Left cardiac atrium (tissue), 4 donors: ENCODE measurements at regions of chr2 and their contacts with region 1.

Region 1: DNA sequence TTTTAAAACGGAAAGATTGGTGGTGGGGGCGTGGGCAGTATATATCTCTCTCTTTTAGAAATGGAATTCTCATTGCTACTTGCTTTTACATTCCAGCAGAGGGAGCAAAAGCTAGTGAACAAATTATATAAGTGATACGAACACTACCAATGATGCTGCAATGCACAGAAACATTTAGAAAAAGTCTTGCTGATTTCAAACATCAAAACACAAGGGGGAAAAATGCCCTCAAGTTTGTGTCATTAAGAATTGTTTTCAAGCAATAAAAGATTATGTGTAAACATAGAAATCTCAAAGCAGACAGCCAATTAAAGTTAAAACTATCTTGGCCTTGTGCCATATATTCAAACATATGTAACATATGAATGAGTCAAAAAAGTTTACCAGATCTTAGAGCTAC is 296.3 kb upstream of the KCNJ3 start:
- DNase-seq: no peak
- ATAC-seq: no peak

Region 2: DNA sequence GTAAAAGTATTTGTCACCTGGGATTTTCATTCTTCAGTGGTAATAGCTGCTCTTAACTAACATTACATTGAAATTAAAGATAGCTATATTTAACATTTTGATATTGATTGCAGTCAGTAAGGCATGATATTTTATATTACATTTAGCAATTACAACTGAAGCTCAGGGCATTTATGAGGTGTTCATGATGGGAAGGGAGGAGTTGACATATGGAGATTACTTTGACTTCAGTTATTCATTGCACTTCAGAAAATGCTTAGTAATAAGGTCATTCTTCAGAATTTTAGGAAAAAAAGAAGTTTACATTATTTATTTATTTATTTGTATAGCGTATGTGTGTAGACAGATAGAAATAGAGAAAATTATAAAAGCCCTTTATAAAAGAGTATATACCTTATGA is 178.5 kb before region 1 on chr2:
- intact Hi-C with region 1: no loop called
- DNase-seq: no peak
- ATAC-seq: no peak

Region 3: GRCh38 chr2:155223781-155224406 is 821.7 kb after region 1 on chr2:
- intact Hi-C with region 1: loop called in 1 of 2 experiments (anchors 10 kb)
- DNase-seq: no peak
- ATAC-seq: no peak

Region 4: GRCh38 chr2:155310589-155310988 is 908.4 kb after region 1 on chr2:
- intact Hi-C with region 1: loop called in 1 of 2 experiments (anchors 5 kb)
- DNase-seq: no peak
- ATAC-seq: no peak